ENCODE measurements at regions of chr3 and their contacts with region 1.

Region 1: DNA sequence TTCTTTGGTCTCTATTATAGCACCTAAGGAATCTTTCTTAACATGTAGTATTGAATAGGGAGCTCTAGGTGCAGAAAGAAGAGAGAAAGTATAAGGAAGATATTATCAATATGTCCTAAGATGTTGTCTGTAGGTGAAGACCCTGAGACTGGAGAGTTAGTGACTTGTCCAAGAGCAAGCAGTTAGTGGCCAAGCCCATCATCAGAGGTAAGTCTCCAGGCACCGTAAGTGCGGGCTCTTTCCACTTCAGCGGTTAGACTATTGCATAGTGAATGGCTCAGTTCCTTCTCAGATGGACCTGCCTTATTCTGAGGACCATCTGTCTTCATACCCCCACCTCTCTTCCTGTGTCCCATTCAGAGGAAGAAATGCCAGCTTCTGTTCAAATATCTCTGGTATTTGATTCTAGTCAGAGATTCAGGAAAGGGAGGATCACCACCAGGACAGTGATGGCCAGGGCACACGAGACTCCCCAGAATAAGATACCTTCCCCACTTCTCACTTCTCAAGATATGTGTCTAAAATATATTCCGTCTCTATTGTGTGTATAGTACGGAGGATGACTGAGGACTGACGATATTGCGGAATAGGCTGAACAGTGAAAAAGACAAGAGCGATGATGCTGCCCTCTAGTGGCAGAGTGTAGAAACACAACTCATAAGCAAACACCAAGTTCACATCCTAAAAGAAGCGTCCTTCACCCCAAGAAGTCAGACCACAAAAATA is 19.1 kb upstream of the ADGRG7 start:
- DNase-seq: peak in 2 of 4 donors; percentile 71 to 85
- ATAC-seq: peak; percentile 97
- H3K4me3 ChIP-seq: no peak overlapping the region
- H3K27ac ChIP-seq: no peak overlapping the region
- H3K4me1 ChIP-seq: no peaks in the 10 kb centered on the region
- H3K27me3 ChIP-seq: no peaks in the 10 kb centered on the region
- CTCF ChIP-seq: peak; percentile 79 to 92

Region 2: GRCh38 chr3:99562138-99562537 is 1028.1 kb before region 1 on chr3:
- intact Hi-C with region 1: no loop called
- DNase-seq: peak in 1 of 4 donors; percentile 30
- ATAC-seq: peak; percentile 47
- H3K4me3 ChIP-seq: no peak overlapping the region
- H3K27ac ChIP-seq: no peak overlapping the region
- H3K4me1 ChIP-seq: no peaks in the 10 kb centered on the region
- H3K27me3 ChIP-seq: no peaks in the 10 kb centered on the region
- CTCF ChIP-seq: no peak

Region 3: GRCh38 chr3:100316641-100317069 is 273.6 kb before region 1 on chr3:
- intact Hi-C with region 1: loop called in 1 of 2 experiments (anchors 10 kb)
- DNase-seq: peak in 2 of 4 donors; percentile 32 to 68
- ATAC-seq: peak; percentile 87
- H3K4me3 ChIP-seq: no peak overlapping the region
- H3K27ac ChIP-seq: no peak overlapping the region
- H3K4me1 ChIP-seq: peaks cover 0 to 6% of the 10 kb centered on the region in 2 donors
- H3K27me3 ChIP-seq: no peaks in the 10 kb centered on the region
- CTCF ChIP-seq: peak; percentile 36 to 59

Region 4: GRCh38 chr3:100465892-100466777 is 124.1 kb before region 1 on chr3:
- intact Hi-C with region 1: loop called in 1 of 2 experiments (anchors 5 kb)
- DNase-seq: no peak
- ATAC-seq: no peak
- H3K4me3 ChIP-seq: no peak overlapping the region
- H3K27ac ChIP-seq: peak overlapping the region in 1 of 2 donors; percentile 41
- H3K4me1 ChIP-seq: peaks cover 0 to 8% of the 10 kb centered on the region in 2 donors
- H3K27me3 ChIP-seq: no peaks in the 10 kb centered on the region
- CTCF ChIP-seq: no peak